Right cardiac atrium (tissue), 5 donors: ENCODE measurements at regions of chr11 and their contacts with region 1.

Region 1: GRCh38 chr11:77187776-77188632 is 60.0 kb downstream of the MYO7A start:
- DNase-seq: peak; percentile 84 to 95 (median 91)
- ATAC-seq: peak; percentile 80 to 81
- H3K4me3 ChIP-seq: no peak overlapping the region
- H3K27ac ChIP-seq: no peak overlapping the region
- H3K4me1 ChIP-seq: no peaks in the 10 kb centered on the region
- H3K27me3 ChIP-seq: no peaks in the 10 kb centered on the region

Region 2: GRCh38 chr11:76885390-76886097 is 302.5 kb before region 1 on chr11:
- intact Hi-C with region 1: no loop called
- DNase-seq: peak in 2 of 3 donors; percentile 36 to 52
- ATAC-seq: peak; percentile 71 to 77
- H3K4me3 ChIP-seq: no peak overlapping the region
- H3K27ac ChIP-seq: no peak overlapping the region
- H3K4me1 ChIP-seq: no peaks in the 10 kb centered on the region
- H3K27me3 ChIP-seq: no peaks in the 10 kb centered on the region

Region 3: DNA sequence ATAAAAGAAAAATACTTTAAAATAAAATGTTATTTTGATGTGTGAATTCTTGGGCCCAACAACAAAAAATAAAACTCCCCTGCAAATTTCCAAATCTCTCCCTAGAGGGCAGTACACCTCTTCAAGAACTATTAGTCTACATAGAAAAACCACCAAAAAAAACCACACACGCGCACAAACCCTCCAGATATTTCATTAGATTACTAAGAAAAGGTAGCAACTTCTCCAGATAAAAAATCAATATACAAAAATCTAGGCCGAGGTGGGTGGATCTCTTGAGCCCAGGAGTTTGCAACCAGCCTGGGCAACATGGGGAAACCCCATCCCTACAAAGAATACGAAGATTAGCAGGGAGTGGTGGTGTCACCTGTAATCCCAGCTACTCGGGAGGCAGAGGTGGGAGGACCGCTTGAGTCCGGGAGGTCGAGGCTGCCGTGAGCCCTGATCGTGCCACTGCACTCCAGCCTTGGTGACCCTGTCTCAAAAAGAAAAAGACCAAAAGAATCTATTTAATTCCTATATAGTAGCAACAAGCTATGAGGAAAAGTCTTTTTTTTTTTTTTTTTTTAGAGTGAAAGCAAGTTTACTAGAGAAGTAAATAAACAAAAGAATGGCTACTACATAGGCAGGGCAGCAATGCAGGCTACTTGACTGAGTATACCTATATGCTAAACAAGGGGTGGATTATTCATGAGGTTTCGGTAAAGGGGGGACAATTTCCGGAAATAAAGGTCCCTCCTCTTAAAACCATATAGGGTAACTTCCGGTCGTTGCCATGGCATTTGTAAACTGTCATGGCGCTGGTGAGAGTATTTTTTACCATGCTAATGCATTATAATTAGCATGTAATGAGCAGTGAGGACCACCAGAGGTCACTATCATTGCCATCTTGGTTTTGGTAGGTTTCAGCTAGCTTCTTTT is 140.7 kb before region 1 on chr11:
- intact Hi-C with region 1: loop called in 2 of 4 experiments (anchors 10 kb)
- DNase-seq: peak in 2 of 3 donors; percentile 70 to 75
- ATAC-seq: peak; percentile 92 to 93
- H3K4me3 ChIP-seq: peak overlapping the region; percentile 51
- H3K27ac ChIP-seq: no peak overlapping the region
- H3K4me1 ChIP-seq: no peaks in the 10 kb centered on the region
- H3K27me3 ChIP-seq: no peaks in the 10 kb centered on the region

Region 4: DNA sequence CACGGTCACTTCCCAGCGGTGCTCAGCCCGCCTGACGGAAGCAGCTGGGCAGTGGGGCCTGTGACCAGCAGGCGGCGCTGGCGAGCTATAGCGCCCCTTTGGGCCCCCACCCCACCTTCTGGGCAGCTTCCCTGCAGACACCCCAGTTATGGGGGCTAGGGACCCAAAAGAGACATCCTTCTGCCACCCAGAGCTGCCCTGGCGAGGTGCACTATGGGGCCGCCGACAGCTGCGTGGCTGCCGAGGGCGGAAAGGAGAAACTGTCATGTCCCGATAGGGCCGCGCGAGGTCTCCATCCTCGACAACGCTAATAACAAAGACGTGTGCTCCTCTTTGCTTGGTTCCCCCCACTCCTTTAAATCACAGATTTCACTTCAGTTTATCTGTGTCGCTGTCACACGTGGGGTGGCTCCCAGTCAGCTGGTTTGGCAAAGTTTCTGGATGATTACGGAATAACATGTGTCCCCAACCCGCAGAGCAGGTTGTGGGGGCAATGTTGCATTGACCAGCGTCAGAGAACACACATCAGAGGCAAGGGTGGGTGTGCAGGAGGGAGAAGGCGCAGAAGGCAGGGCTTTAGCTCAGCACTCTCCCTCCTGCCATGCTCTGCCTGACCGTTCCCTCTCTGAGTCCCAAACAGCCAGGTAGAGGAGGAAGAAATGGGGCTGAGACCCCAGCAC is 60.6 kb before region 1 on chr11:
- intact Hi-C with region 1: loop called (anchors 2 to 5 kb)
- DNase-seq: peak; percentile 59 to 86 (median 83)
- ATAC-seq: peak; percentile 70 to 77
- H3K4me3 ChIP-seq: peak overlapping the region; percentile 38
- H3K27ac ChIP-seq: no peak overlapping the region
- H3K4me1 ChIP-seq: peaks cover 7% of the 10 kb centered on the region
- H3K27me3 ChIP-seq: no peaks in the 10 kb centered on the region

Region 5: GRCh38 chr11:77370226-77370625 is 182.2 kb after region 1 on chr11:
- intact Hi-C with region 1: no loop called
- DNase-seq: no peak
- ATAC-seq: no peak
- H3K4me3 ChIP-seq: no peak overlapping the region
- H3K27ac ChIP-seq: no peak overlapping the region
- H3K4me1 ChIP-seq: no peaks in the 10 kb centered on the region
- H3K27me3 ChIP-seq: no peaks in the 10 kb centered on the region

Region 6: DNA sequence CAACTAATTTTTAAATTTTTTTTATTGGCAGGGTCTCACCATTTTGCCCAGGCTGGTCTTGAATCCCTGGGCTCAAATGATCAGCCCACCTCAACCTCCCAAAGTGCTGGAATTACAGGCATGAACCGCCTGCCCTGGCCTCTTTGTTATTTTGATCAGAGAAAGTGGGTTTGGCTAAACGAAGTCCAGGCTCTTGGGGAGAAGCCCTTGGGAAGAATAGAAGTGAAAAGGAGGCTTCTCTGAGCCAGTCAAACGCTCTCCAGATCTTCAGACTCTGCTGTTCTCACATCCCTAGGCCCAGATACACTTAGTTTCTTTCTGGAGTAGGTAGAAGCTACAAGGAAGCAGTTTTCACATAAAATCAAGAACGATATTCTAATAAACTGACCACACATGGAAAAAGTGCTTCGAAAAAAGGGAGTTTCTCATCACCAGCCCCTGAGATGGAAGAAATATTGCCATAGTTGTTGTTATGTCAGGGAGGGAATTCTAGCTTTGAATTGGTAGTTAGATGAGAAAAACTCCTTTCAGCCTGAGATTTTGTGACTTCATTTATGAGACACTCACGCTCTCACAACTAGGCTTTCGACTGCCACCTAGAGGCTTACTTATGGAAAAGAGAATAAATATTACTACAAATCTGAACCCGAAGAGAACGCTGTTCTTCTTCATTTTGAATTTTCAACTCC is 360.0 kb after region 1 on chr11:
- intact Hi-C with region 1: loop called in 3 of 4 experiments (anchors 5 to 10 kb)
- DNase-seq: no peak
- ATAC-seq: peak; percentile 29 to 43
- H3K4me3 ChIP-seq: no peak overlapping the region
- H3K27ac ChIP-seq: no peak overlapping the region
- H3K4me1 ChIP-seq: no peaks in the 10 kb centered on the region
- H3K27me3 ChIP-seq: no peaks in the 10 kb centered on the region

Region 7: DNA sequence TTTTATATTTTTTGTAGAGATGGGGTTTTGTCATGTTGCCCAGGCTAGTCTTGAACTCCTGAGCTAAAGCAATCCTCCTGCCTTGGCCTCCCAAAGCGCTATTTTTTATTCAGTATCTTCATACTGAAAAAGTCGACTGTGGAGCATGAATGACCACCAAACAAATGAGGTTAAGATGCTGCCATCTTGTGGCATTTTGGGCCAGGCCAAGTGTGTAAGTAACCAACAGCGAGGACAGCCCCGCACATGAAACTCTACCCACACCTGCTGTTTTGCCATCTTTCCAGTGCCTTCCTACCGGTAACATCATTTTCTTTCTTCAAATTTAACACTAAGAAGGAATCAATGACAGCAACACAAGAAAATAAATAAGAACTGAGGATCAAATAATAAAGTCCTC is 369.6 kb after region 1 on chr11:
- intact Hi-C with region 1: loop called in 1 of 4 experiments (anchors 10 kb)
- DNase-seq: no peak
- ATAC-seq: no peak
- H3K4me3 ChIP-seq: no peak overlapping the region
- H3K27ac ChIP-seq: no peak overlapping the region
- H3K4me1 ChIP-seq: no peaks in the 10 kb centered on the region
- H3K27me3 ChIP-seq: no peaks in the 10 kb centered on the region